ENCODE measurements at regions of chr6 and their contacts with region 1.

Region 1: DNA sequence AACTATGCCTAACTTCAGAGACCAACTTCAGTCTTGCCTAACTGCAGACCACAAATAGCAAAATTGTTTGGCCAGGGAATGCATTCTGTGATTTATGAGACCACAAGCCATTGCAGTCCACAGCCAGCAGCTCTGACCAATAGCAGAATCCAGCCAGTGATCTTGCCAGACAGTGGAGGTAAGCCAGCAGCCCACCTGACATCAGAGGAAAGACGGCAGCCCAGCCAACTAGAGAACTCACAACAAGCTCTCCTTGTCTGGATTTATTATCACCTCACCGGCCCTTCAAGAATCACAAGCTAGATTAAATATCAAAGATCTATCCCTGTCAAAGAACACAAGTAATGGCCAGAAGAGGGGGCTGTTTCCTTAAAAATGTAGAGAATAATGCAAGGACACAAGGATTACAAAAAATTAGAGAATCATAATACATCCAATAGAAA is 66.5 kb upstream of the SLC35F1 start:
- DNase-seq: peak; percentile 47
- H3K4me3 Mint-ChIP-seq: no peak overlapping the region
- H3K27ac Mint-ChIP-seq: no peak overlapping the region
- H3K4me1 Mint-ChIP-seq: no peaks in the 10 kb centered on the region
- H3K27me3 Mint-ChIP-seq: no peaks in the 10 kb centered on the region
- CTCF ChIP-seq: no peak

Region 2: GRCh38 chr6:117976030-117976651 is 135.6 kb after region 1 on chr6:
- CTCF ChIA-PET with region 1: interaction called, 6 read pairs
- intact Hi-C with region 1: loop called (anchors 5 kb)
- DNase-seq: peak; percentile 16
- H3K4me3 Mint-ChIP-seq: no peak overlapping the region
- H3K27ac Mint-ChIP-seq: no peak overlapping the region
- H3K4me1 Mint-ChIP-seq: no peaks in the 10 kb centered on the region
- H3K27me3 Mint-ChIP-seq: peaks cover 14% of the 10 kb centered on the region
- CTCF ChIP-seq: peak; percentile 50

Region 3: DNA sequence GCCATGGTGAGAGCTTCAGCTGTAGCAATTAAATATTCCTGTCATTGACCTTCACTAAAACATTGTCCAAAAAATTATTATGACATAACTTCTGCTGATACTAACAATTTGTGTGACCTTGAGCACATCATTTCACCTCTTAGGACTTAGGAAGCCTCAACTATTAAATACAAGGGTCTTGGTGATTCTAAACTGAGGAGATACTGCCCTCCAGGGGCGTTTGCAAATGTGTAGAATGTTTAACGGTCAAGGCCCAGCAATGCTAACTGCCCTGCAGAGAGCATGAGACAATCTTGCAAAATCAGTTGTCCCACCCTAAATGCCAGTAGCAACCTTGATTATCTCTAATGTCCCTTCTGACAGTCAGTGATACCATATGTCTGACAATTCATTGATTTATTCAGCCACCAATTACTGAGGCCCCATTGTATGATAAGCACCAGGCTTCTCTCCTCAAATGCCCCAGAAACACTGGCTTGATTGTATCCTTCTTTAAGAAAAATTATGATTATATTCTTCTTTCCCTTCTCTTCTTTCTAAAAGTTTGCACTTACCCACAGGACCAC is 423.4 kb after region 1 on chr6:
- CTCF ChIA-PET with region 1: no interaction called
- intact Hi-C with region 1: loop called (anchors 1 kb)
- DNase-seq: no peak
- H3K4me3 Mint-ChIP-seq: no peak overlapping the region
- H3K27ac Mint-ChIP-seq: no peak overlapping the region
- H3K4me1 Mint-ChIP-seq: no peaks in the 10 kb centered on the region
- H3K27me3 Mint-ChIP-seq: no peaks in the 10 kb centered on the region
- CTCF ChIP-seq: no peak

Region 4: DNA sequence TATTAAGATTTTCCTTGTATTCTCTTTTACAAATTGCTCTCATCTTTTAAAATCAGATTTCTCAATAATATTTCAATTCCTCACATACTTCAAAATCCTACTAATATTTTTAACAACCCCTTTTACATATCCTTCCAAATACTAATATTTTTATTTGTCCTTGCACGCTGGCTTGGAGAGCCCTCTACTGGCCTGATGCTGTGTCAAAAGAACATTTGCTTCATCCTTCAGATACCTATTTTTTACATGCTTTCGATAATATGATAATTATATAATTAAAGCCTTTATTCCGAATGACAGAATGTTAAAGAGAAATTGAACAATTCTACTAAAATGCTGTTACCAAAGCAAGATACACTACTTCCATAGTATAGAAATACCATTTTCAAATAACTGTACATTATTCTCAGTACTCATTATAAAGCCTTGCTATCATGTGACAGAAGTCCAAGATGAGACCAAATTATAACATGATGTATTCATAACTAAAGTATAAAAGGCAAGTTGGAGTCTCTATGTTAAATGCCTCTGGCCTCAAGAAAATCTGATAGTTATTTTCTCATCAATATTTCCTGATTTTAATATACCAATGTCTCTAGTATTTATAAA is 668.6 kb after region 1 on chr6:
- CTCF ChIA-PET with region 1: no interaction called
- intact Hi-C with region 1: loop called (anchors 1 kb)
- DNase-seq: peak; percentile 34
- H3K4me3 Mint-ChIP-seq: no peak overlapping the region
- H3K27ac Mint-ChIP-seq: no peak overlapping the region
- H3K4me1 Mint-ChIP-seq: no peaks in the 10 kb centered on the region
- H3K27me3 Mint-ChIP-seq: no peaks in the 10 kb centered on the region
- CTCF ChIP-seq: no peak

Region 5: GRCh38 chr6:118551063-118552053 is 710.8 kb after region 1 on chr6:
- CTCF ChIA-PET with region 1: no interaction called
- intact Hi-C with region 1: loop called (anchors 1 kb)
- DNase-seq: peak; percentile 16
- H3K4me3 Mint-ChIP-seq: no peak overlapping the region
- H3K27ac Mint-ChIP-seq: no peak overlapping the region
- H3K4me1 Mint-ChIP-seq: peaks cover 5% of the 10 kb centered on the region
- H3K27me3 Mint-ChIP-seq: no peaks in the 10 kb centered on the region
- CTCF ChIP-seq: peak; percentile 15

Region 6: DNA sequence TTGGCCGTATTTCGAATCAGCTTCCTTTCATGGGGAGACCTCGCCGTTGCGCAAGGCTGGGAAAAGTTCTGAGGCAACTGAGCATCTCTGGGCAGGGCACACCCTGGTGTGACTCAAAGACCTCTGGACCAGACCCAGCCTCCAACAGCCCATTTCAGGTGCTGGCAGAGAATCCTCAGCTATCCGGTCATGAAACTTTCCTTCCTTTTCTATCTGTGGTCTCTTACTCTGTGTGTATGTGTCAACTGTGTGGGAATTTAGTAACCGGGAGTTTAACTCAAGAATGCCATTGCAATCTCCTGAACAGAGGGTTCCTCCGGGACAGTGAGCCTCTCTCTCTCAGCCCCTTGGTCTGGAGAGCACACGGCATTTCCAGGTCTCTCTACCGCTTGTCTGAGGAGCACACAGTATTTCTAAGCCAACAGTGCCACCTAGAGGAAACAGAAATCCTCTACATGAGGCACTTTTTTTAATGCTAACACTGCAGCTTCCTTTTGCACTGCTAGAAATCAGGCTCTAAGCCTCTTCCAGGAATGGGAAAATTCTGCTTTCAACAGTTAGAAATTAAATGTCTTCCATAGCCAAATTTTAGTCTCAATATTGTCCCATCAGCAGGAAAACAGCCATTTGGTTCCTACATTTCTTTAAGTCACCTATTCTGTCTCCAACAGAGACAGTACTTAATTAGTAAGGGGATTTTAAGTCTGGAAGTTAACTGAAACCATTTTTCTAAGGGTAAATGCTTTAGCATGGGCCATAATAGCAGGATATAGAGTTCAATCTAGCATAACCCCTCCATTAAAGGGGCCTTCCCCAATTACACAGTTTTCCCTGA is 740.2 kb after region 1 on chr6:
- CTCF ChIA-PET with region 1: interaction called, 3 read pairs
- intact Hi-C with region 1: loop called (anchors 10 kb)
- DNase-seq: peak; percentile 34
- H3K4me3 Mint-ChIP-seq: no peak overlapping the region
- H3K27ac Mint-ChIP-seq: no peak overlapping the region
- H3K4me1 Mint-ChIP-seq: peaks cover 19% of the 10 kb centered on the region
- H3K27me3 Mint-ChIP-seq: no peaks in the 10 kb centered on the region
- CTCF ChIP-seq: no peak

Region 7: GRCh38 chr6:118776607-118777549 is 936.3 kb after region 1 on chr6:
- CTCF ChIA-PET with region 1: no interaction called
- intact Hi-C with region 1: loop called (anchors 10 kb)
- DNase-seq: peak; percentile 64
- H3K4me3 Mint-ChIP-seq: no peak overlapping the region
- H3K27ac Mint-ChIP-seq: no peak overlapping the region
- H3K4me1 Mint-ChIP-seq: peaks cover 13% of the 10 kb centered on the region
- H3K27me3 Mint-ChIP-seq: no peaks in the 10 kb centered on the region
- CTCF ChIP-seq: peak; percentile 26